ENCODE measurements at regions of chr3 and their contacts with region 1.

Region 1: GRCh38 chr3:107064445-107065060 is 312.7 kb upstream of the CCDC54 start:
- DNase-seq: peak; percentile 83
- H3K4me3 ChIP-seq: no peak overlapping the region
- H3K27ac ChIP-seq: no peak overlapping the region
- H3K4me1 ChIP-seq: peaks cover 14% of the 10 kb centered on the region
- H3K27me3 ChIP-seq: no peaks in the 10 kb centered on the region
- CTCF ChIP-seq: peak; percentile 63 to 68
- POLR2A ChIP-seq: no peak

Region 2: DNA sequence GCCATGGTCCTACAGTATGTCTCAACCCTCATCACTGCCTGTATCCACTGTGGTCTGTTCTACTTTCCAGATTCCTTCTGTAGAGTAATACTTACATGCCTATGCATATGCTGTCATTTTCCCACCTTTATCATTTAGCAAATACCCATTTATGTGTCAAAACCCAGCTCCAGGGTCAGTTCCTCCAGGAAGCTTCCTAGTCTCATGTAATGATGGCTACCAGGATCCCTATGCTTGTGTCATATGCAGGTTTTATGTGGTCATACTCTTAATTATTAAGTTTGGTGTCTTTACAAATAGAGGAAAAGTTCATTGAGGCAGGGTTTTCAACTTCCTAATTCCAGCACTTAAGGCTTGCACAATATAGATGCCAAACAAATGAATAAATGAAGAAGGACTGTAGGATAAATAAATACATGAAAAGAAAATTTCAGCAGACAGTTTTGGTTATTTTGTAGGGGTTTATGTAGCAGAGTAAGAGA is 1527.0 kb before region 1 on chr3:
- CTCF ChIA-PET with region 1: no interaction called
- POLR2A ChIA-PET with region 1: no interaction called
- dilution Hi-C with region 1: no loop called
- intact Hi-C with region 1: loop called (anchors 10 kb)
- DNase-seq: no peak
- H3K4me3 ChIP-seq: no peak overlapping the region
- H3K27ac ChIP-seq: no peak overlapping the region
- H3K4me1 ChIP-seq: peaks cover 3% of the 10 kb centered on the region
- H3K27me3 ChIP-seq: no peaks in the 10 kb centered on the region
- CTCF ChIP-seq: no peak
- POLR2A ChIP-seq: no peak

Region 3: GRCh38 chr3:105868742-105869530 is 1195.6 kb before region 1 on chr3 and contains the start of gene CBLB:
- CTCF ChIA-PET with region 1: interaction called, 6 read pairs
- POLR2A ChIA-PET with region 1: no interaction called
- dilution Hi-C with region 1: no loop called
- intact Hi-C with region 1: loop called (anchors 10 kb)
- DNase-seq: peak; percentile 96
- H3K4me3 ChIP-seq: peak within 1 kb of the TSS; percentile 84 to 97 (median 94)
- H3K27ac ChIP-seq: peak within 1 kb of the TSS; percentile 64
- H3K4me1 ChIP-seq: peaks cover 34% of the 10 kb centered on the region
- H3K27me3 ChIP-seq: no peaks in the 10 kb centered on the region
- CTCF ChIP-seq: no peak
- POLR2A ChIP-seq: no peak
- total RNA-seq, gene CBLB: 39.6 and 39.8 TPM in 2 replicates

Region 4: GRCh38 chr3:106609666-106610301 is 454.8 kb before region 1 on chr3:
- CTCF ChIA-PET with region 1: interaction called, 38 read pairs
- POLR2A ChIA-PET with region 1: no interaction called
- dilution Hi-C with region 1: no loop called
- intact Hi-C with region 1: loop called (anchors 1 kb)
- DNase-seq: peak; percentile 92
- H3K4me3 ChIP-seq: no peak overlapping the region
- H3K27ac ChIP-seq: no peak overlapping the region
- H3K4me1 ChIP-seq: peaks cover 18% of the 10 kb centered on the region
- H3K27me3 ChIP-seq: no peaks in the 10 kb centered on the region
- CTCF ChIP-seq: peak; percentile 75 to 90
- POLR2A ChIP-seq: no peak

Region 5: GRCh38 chr3:106629215-106629832 is 435.2 kb before region 1 on chr3:
- CTCF ChIA-PET with region 1: interaction called, 6 read pairs
- POLR2A ChIA-PET with region 1: no interaction called
- dilution Hi-C with region 1: no loop called
- intact Hi-C with region 1: loop called (anchors 2 kb)
- DNase-seq: peak; percentile 9
- H3K4me3 ChIP-seq: no peak overlapping the region
- H3K27ac ChIP-seq: no peak overlapping the region
- H3K4me1 ChIP-seq: peaks cover 15% of the 10 kb centered on the region
- H3K27me3 ChIP-seq: no peaks in the 10 kb centered on the region
- CTCF ChIP-seq: no peak
- POLR2A ChIP-seq: no peak

Region 6: GRCh38 chr3:106824856-106825255 is 239.7 kb before region 1 on chr3:
- CTCF ChIA-PET with region 1: interaction called, 3 read pairs
- POLR2A ChIA-PET with region 1: no interaction called
- dilution Hi-C with region 1: no loop called
- intact Hi-C with region 1: loop called (anchors 10 kb)
- DNase-seq: peak; percentile 42
- H3K4me3 ChIP-seq: no peak overlapping the region
- H3K27ac ChIP-seq: no peak overlapping the region
- H3K4me1 ChIP-seq: no peaks in the 10 kb centered on the region
- H3K27me3 ChIP-seq: no peaks in the 10 kb centered on the region
- CTCF ChIP-seq: peak in 1 of 2 donors; percentile 27
- POLR2A ChIP-seq: no peak

Region 7: GRCh38 chr3:107045791-107046190 is 18.8 kb before region 1 on chr3:
- CTCF ChIA-PET with region 1: interaction called, 11 read pairs
- POLR2A ChIA-PET with region 1: no interaction called
- dilution Hi-C with region 1: no loop called
- intact Hi-C with region 1: no loop called
- DNase-seq: no peak
- H3K4me3 ChIP-seq: no peak overlapping the region
- H3K27ac ChIP-seq: no peak overlapping the region
- H3K4me1 ChIP-seq: no peaks in the 10 kb centered on the region
- H3K27me3 ChIP-seq: no peaks in the 10 kb centered on the region
- CTCF ChIP-seq: no peak
- POLR2A ChIP-seq: no peak

Measured in endothelial cell of umbilical vein (primary cell).